Astrocyte of the cerebellum (primary cell): ENCODE measurements at regions of chr3 and their contacts with region 1.

Region 1: DNA sequence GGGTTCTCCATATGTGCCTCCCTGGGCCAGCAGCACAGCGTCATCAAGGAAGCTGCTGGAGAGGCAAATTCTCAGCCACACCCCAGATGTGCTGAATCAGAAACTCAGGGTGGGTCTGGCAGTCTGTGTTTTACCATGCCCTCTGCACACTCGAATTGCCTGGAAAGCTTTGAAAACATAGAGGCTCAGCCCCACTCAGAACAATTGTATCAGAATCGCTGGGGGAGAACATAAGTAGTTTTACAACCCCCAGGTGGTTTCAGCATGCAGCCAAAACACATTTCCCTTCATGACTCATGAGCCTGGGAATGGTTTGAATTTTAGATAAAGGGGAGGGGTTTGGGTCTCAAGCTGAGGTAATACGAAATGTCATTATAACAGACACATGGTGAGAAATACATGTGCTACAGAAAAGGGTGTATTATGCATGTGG is 9.6 kb downstream of the TGM4 start:
- DNase-seq: peak; percentile 99
- H3K4me3 ChIP-seq: no peak overlapping the region
- CTCF ChIP-seq: no peak

Region 2: DNA sequence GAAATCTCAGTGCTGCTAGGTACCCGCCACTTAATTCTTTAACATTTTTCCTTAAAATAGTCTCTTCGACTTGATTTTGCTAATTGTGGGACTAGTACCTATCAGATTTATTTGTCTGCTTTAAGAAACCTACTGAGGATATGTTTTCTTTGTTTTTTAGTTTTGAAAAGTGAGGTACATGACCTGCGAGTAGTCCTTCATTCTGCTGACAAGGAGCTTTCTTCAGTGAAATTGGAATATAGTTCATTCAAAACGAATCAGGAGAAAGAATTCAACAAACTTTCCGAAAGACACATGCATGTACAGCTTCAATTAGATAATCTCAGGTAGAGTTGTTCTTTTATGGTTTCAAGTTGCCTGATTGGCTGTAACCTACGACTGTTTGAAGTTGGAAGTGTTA is 69.3 kb before region 1 on chr3:
- in situ Hi-C with region 1: loop called (anchors 5 kb)
- DNase-seq: no peak
- H3K4me3 ChIP-seq: no peak overlapping the region
- CTCF ChIP-seq: no peak